Adrenal gland (tissue), 19 donors: ENCODE measurements at regions of chr6 and their contacts with region 1.

Region 1: GRCh38 chr6:148166339-148166968 is 176.2 kb upstream of the SASH1 start:
- DNase-seq: no peak
- H3K4me3 ChIP-seq: no peak overlapping the region
- H3K27ac ChIP-seq: no peak overlapping the region
- H3K4me1 ChIP-seq: no peaks in the 10 kb centered on the region
- H3K27me3 ChIP-seq: no peaks in the 10 kb centered on the region
- CTCF ChIP-seq: peak; percentile 44 to 75 (median 64)
- POLR2A ChIP-seq: no peak

Region 2: GRCh38 chr6:147506704-147507114 is 659.7 kb before region 1 on chr6:
- intact Hi-C with region 1: loop called (anchors 5 kb)
- DNase-seq: peak; percentile 53 to 82 (median 63)
- H3K4me3 ChIP-seq: peak overlapping the region in 1 of 4 donors; percentile 60
- H3K27ac ChIP-seq: no peak overlapping the region
- H3K4me1 ChIP-seq: peaks cover 4 to 18% of the 10 kb centered on the region in 2 donors
- H3K27me3 ChIP-seq: peaks cover 23% of the 10 kb centered on the region
- CTCF ChIP-seq: peak; percentile 52 to 78 (median 64)
- POLR2A ChIP-seq: no peak

Region 3: DNA sequence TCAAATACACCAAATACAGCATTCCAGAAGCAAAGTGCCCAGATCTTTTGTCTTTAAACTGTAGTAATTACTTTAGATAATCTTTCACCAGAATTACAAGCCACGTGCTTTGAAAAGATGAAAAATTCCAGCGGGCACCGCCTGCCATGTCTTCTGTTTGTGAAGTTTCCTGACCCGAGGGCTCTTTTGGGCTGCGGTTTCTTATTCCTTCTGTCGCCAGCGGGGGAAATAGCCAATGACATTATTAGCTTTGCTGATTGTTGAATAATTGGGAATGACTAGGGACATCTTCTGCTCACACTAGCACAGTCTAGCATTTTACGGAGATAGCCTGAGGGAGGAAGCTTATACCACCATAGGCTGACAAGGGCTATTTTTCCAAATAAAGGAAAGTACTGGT is 533.3 kb before region 1 on chr6:
- intact Hi-C with region 1: no loop called
- DNase-seq: no peak
- H3K4me3 ChIP-seq: no peak overlapping the region
- H3K27ac ChIP-seq: no peak overlapping the region
- H3K4me1 ChIP-seq: no peaks in the 10 kb centered on the region
- H3K27me3 ChIP-seq: no peaks in the 10 kb centered on the region
- CTCF ChIP-seq: no peak
- POLR2A ChIP-seq: no peak

Region 4: GRCh38 chr6:148118244-148118643 is 48.2 kb before region 1 on chr6:
- intact Hi-C with region 1: no loop called
- DNase-seq: no peak
- H3K4me3 ChIP-seq: no peak overlapping the region
- H3K27ac ChIP-seq: no peak overlapping the region
- H3K4me1 ChIP-seq: no peaks in the 10 kb centered on the region
- H3K27me3 ChIP-seq: no peaks in the 10 kb centered on the region
- CTCF ChIP-seq: no peak
- POLR2A ChIP-seq: no peak

Region 5: DNA sequence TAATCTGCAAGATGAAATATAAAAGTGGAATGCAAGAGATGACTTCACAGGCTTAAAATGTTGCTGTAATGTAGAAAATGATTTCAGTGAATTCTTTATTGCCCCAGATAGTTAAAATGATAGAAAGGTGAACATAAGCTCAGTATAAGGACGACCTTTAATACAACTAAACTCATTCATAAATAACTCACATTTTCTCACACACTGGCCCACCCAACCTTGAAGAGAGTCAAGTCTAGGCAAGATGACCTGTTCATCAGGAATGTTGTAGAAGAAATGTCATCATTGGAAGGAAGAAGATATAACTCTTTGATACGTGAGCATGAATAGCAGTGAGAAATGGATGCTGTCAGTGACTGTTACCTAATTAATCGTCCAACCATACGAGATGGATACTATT is 65.1 kb after region 1 on chr6:
- intact Hi-C with region 1: no loop called
- DNase-seq: no peak
- H3K4me3 ChIP-seq: no peak overlapping the region
- H3K27ac ChIP-seq: no peak overlapping the region
- H3K4me1 ChIP-seq: no peaks in the 10 kb centered on the region
- H3K27me3 ChIP-seq: no peaks in the 10 kb centered on the region
- CTCF ChIP-seq: no peak
- POLR2A ChIP-seq: no peak

Region 6: GRCh38 chr6:148250975-148251685 is 84.7 kb after region 1 on chr6:
- intact Hi-C with region 1: loop called in 1 of 2 experiments (anchors 5 kb)
- DNase-seq: no peak
- H3K4me3 ChIP-seq: no peak overlapping the region
- H3K27ac ChIP-seq: no peak overlapping the region
- H3K4me1 ChIP-seq: no peaks in the 10 kb centered on the region
- H3K27me3 ChIP-seq: no peaks in the 10 kb centered on the region
- CTCF ChIP-seq: peak in 4 of 6 experiments; percentile 24 to 51 (median 36)
- POLR2A ChIP-seq: no peak

Region 7: GRCh38 chr6:148997865-148998264 is 831.4 kb after region 1 on chr6:
- intact Hi-C with region 1: no loop called
- DNase-seq: no peak
- H3K4me3 ChIP-seq: no peak overlapping the region
- H3K27ac ChIP-seq: no peak overlapping the region
- H3K4me1 ChIP-seq: peaks cover 14 to 19% of the 10 kb centered on the region in 2 donors
- H3K27me3 ChIP-seq: no peaks in the 10 kb centered on the region
- CTCF ChIP-seq: no peak
- POLR2A ChIP-seq: no peak